GM13977 (cell line): ENCODE measurements at regions of chr12 and their contacts with region 1.

Region 1: DNA sequence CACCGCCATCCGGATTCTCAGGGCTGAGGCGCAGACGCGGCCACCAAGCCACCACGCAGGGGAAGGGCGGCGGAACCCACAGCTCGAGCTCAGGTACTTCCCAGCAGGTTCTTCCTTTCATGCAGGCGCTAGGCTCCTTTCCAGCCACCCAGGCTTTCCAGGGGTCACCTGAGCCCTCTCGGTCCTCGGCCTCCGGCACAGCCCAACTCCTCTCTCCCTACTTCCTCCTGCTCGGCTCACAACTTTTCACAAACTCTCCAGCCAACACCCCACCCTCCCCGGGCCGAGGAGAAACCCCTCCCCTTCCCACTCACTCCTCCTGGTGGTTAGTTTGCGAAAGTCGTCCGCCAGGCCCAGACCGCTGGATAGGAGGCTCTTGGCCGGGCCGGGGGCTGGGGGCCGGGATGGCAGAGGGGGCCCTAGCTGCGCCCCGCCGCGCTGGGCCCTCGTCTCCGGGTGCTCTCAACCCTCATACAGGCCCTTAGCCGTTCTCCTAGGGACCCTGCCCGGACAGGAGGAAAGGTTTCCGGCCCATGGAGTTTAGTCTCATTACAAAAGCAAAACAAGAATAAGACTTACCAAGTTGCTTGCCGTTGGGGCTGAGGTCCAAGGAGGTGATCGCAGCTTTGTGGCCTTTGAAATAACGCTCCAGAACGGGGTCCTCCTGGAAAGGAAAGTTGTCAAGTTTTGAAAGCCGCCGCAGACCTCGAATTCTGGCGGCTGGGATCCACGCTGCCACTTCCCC is at the start of gene GALNT4:
- DNase-seq: peak; percentile 89
- CTCF ChIP-seq: peak; percentile 70

Region 2: GRCh38 chr12:89040146-89040964 is 484.4 kb before region 1 on chr12:
- in situ Hi-C with region 1: loop called (anchors 10 kb)
- DNase-seq: peak; percentile 36
- CTCF ChIP-seq: peak; percentile 19

Region 3: GRCh38 chr12:89470741-89471509 is 53.8 kb before region 1 on chr12:
- in situ Hi-C with region 1: loop called (anchors 10 kb)
- DNase-seq: peak; percentile 32
- CTCF ChIP-seq: peak; percentile 67

Region 4: GRCh38 chr12:90253674-90254181 is 729.0 kb after region 1 on chr12:
- in situ Hi-C with region 1: loop called (anchors 25 kb)
- DNase-seq: peak; percentile 46
- CTCF ChIP-seq: peak; percentile 35

Region 5: GRCh38 chr12:90940872-90941499 is 1416.3 kb after region 1 on chr12:
- in situ Hi-C with region 1: loop called (anchors 25 kb)
- DNase-seq: peak; percentile 21
- CTCF ChIP-seq: peak; percentile 61